ENCODE measurements at regions of chr17 and their contacts with region 1.

Region 1: DNA sequence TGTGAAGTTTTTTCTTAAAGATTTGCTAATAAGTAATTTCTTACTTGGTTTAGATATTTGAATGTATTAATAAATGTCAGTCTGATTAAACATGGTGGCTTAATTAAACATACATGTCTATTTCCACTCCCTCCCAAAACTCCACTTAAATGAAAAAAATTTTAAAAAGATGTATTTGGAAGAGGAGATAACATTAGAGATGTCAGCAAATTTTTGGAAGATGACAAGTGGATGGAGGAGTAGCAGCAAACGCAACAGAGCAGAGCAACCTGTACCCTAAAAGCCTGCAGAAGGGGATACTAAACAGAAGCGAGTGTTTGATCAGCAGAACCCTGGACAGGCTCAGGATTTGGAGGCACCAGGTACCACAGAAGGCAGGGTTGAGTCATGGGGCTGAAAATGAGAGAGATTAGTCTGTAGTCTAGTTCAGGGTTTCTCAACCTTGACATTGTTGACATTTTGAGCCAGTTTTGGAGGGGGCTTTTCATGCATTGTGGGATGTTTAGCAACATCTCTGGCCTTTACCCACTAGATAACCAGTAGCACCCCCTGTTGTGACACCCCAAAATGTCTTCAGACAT is 17.8 kb downstream of the LUC7L3 start:
- DNase-seq: no peak
- H3K4me3 ChIP-seq: no peak overlapping the region
- H3K27ac ChIP-seq: no peak overlapping the region
- H3K4me1 ChIP-seq: peaks cover 32% of the 10 kb centered on the region
- H3K27me3 ChIP-seq: no peaks in the 10 kb centered on the region
- CTCF ChIP-seq: no peak
- POLR2A ChIP-seq: no peak

Region 2: DNA sequence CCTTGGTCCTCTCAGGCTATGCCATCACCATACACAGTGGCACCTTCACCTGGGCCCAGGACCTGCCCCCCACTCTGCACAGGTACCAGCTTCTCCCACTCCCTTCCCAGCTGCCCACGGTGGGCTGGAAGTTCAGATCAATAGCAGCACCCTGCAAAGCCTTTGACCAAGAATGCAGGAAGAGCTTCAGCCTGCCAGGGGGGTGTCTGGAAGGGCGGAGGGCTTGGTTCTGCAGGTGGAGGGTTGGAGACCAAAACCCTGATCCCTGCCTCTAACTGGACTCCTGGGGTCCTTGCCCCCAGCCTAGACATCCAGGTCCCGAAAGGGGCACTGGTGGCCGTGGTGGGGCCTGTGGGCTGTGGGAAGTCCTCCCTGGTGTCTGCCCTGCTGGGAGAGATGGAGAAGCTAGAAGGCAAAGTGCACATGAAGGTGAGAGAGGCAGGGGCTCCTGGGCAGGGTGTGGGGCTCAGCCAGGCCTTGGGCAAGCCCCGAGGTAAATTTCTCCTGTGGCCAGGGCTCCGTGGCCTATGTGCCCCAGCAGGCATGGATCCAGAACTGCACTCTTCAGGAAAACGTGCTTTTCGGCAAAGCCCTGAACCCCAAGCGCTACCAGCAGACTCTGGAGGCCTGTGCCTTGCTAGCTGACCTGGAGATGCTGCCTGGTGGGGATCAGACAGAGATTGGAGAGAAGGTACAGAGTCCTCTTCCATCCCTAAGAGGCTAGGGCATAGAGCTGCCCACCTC is 68.2 kb before region 1 on chr17:
- intact Hi-C with region 1: no loop called
- DNase-seq: no peak
- H3K4me3 ChIP-seq: no peak overlapping the region
- H3K27ac ChIP-seq: no peak overlapping the region
- H3K4me1 ChIP-seq: peaks cover 17% of the 10 kb centered on the region
- H3K27me3 ChIP-seq: no peaks in the 10 kb centered on the region
- CTCF ChIP-seq: no peak
- POLR2A ChIP-seq: no peak

Region 3: GRCh38 chr17:50681263-50682210 is 55.7 kb before region 1 on chr17:
- intact Hi-C with region 1: loop called (anchors 2 kb)
- DNase-seq: no peak
- H3K4me3 ChIP-seq: no peak overlapping the region
- H3K27ac ChIP-seq: peak overlapping the region; percentile 44
- H3K4me1 ChIP-seq: peaks cover 19% of the 10 kb centered on the region
- H3K27me3 ChIP-seq: no peaks in the 10 kb centered on the region
- CTCF ChIP-seq: peak; percentile 31 to 63 (median 31)
- POLR2A ChIP-seq: no peak

Measured in vagina (tissue), 2 donors.